Posterior vena cava (tissue), 2 donors: ENCODE measurements at regions of chr4 and their contacts with region 1.

Region 1: GRCh38 chr4:80989921-80990544 is 40.5 kb upstream of the BMP3 start:
- DNase-seq: no peak

Region 2: DNA sequence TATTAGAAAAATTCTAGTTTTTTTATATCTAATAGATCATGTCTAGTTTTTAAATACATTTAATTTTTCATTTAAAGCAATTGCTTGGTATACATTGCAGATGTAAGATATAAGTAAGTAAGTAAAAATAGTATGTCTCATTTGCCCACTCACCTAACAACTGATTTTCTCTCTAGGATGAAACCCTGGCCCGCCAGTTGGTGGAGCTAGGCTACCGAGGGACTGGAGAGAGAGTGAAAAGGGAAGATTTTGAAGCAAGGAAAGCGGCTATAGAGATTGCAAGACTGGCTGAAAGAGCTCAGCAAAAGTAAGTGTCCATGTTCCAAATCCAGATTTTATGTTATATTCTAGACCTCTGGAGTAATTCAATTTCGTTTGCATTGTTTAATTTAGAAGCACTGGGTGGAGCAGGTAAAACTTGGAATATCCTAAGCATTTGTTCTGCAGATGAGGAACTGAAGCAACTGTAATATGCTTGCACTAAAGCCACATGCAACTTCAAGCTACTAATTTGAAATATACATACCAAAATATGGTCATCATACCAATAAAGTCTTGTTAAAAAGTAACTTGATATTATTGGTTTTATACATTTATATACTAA is 627.4 kb before region 1 on chr4:
- intact Hi-C with region 1: loop called in 1 of 2 experiments (anchors 5 kb)
- DNase-seq: no peak

Region 3: DNA sequence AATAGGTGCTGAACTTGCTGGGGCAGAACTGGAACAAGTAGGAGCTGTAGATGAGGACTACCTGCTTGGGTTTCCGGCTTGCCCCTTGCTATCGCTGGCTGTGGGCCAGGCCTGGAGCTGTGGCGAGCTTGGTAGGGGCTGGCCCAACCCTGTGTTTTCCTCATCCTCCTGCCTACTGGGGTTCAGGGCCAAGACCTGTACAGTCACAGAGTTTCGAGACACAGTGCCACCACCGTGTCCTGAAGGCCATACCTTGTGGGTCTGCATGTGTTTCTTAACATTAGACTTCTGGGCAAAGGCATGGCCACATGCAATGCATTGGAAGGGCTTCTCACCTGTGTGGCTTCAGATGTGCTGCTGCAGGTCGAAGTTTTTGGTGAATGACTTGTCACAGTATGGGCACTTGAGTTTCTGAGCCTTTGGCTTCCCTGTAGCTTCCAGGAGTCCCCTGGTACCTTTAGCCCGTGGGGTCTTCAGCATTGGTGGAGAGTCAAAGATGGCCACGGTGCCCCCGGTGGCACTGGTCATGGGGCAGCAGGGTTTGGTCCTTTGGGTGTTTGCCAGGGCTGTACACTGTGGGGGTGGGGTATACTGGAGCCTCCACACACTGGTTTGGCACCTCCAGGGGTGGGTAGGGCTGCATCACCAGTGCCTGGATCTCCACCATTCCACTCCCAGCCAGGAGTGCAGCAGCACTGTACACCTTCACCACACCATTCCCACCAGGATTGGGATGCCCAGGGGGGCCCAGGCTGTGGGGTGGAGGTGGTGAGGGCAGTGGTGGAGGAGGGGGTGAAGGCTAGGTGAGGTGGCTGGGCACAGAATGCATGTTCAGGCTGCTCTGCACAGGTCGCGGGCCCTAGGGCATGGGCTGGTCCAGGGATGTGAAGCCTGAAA is 602.4 kb before region 1 on chr4:
- intact Hi-C with region 1: loop called in 1 of 2 experiments (anchors 10 kb)
- DNase-seq: no peak